Left cardiac atrium (tissue), 4 donors: ENCODE measurements at regions of chr7 and their contacts with region 1.

Region 1: GRCh38 chr7:121437456-121438127 is 41.5 kb upstream of the FAM3C start:
- DNase-seq: no peak
- ATAC-seq: peak in 1 of 2 donors; percentile 19

Region 2: DNA sequence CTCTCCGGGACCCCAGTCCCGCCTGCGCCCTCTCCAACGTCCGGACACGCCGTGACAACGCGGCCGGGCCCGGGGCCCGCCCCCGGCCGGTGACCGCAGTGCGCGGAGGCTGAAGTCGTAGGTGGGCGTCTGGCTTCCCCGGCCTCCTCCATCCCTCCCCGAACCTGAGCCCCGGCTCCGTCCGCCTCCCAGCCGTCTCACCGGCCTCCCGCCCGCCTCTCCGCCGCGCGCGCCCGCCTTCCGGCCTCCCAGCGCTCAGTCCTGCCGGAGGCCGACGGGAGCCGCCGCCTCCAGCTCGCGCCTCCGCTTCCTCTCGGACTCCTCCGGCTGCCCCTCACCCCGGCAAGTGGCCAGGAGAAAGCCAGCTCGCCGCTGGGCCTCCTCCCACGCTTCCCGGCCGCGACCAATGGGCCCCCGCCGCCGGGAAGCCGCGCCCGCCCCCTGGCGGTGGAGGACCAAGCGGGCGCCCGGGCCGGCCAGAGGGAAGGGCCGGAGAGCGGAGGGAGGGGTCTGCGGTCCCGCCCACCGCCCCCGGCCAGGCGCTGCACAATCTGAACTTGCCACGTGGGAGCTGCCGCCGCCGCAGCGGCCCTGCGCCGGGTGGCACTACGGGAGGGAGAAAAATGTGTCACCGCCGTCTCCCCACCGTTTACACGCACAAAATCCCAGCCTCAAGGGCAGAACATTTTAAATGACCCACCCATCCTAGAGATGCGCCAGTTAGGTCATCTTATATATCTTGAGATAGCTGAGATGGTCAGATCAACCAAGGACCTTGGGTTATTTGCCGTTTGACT is 41.4 kb before region 1 on chr7 and contains the start of gene FAM3C:
- intact Hi-C with region 1: loop called in 1 of 2 experiments (anchors 5 kb)
- DNase-seq: peak; percentile 95
- ATAC-seq: peak; percentile 99
- total RNA-seq, gene FAM3C: 47.5 to 68.4 TPM